ENCODE measurements at regions of chr1 and their contacts with region 1.

Region 1: GRCh38 chr1:203861379-203862184 is at the start of gene SNRPE:
- DNase-seq: peak; percentile 98
- ATAC-seq: peak; percentile 98
- H3K4me3 Mint-ChIP-seq: peak within 1 kb of the TSS; percentile 100
- H3K27ac Mint-ChIP-seq: peak within 1 kb of the TSS; percentile 99
- H3K4me1 Mint-ChIP-seq: peaks cover 8% of the 10 kb centered on the region
- H3K27me3 Mint-ChIP-seq: no peaks in the 10 kb centered on the region
- total RNA-seq, gene SNRPE: 211 to 416 TPM

Region 2: GRCh38 chr1:202888531-202889360 is 972.8 kb before region 1 on chr1 and contains the start of gene RABIF:
- CTCF ChIA-PET with region 1: no interaction called
- POLR2A ChIA-PET with region 1: no interaction called
- intact Hi-C with region 1: loop called in 1 of 2 experiments (anchors 2 kb)
- DNase-seq: peak; percentile 98
- ATAC-seq: peak; percentile 94
- H3K4me3 Mint-ChIP-seq: peak within 1 kb of the TSS; percentile 91
- H3K27ac Mint-ChIP-seq: peak within 1 kb of the TSS; percentile 96
- H3K4me1 Mint-ChIP-seq: peaks cover 15% of the 10 kb centered on the region
- H3K27me3 Mint-ChIP-seq: no peaks in the 10 kb centered on the region
- total RNA-seq, gene RABIF: 6.8 to 7.4 TPM

Region 3: DNA sequence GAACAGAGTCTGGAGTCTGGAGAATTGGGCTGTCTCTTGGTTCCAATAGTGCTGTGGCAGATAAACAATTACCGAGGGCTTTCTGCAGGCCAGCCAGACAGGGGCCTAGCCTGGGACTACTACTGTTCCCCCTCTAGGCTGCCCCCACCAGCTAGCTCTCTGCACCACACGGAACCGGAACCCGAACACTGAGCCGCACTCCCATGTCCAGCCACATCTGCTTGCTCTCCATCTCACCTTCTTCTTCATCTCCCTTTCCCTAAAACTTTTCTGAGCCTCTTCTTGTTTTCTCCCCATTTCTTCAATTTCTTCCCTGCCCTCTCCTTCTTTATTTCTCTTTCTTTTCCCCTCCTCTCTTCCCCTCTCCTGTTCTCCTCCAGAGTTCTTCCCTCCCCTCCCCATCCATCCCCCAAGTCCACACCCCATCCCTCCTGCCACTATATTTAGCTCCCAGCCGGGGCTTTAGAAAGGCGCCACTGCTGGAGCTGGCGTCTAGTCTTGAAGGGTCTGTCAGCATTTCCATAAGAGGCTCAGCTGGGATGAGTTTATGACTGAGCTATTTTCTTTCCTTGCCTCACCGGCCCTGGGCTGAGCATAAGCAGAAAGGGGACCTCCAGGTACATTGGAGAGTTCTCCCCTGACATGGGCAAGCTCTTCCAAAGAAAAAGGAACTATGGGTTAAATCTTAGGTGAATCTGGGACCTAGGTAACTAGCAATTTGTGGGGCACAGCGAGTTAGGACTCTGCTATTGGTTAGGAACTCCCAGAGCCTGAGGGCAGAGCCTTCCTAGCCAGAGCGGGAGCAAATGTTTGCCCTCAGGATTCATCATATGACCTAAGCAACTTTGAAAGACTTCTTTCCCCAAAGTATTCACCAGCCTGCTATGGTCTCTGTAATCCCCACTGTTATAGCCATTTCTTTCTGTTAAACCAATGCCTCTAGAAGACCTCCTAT is 260.5 kb before region 1 on chr1:
- CTCF ChIA-PET with region 1: no interaction called
- POLR2A ChIA-PET with region 1: no interaction called
- intact Hi-C with region 1: no loop called
- DNase-seq: no peak
- ATAC-seq: no peak
- H3K4me3 Mint-ChIP-seq: no peak overlapping the region
- H3K27ac Mint-ChIP-seq: peak overlapping the region; percentile 51
- H3K4me1 Mint-ChIP-seq: peaks cover 10% of the 10 kb centered on the region
- H3K27me3 Mint-ChIP-seq: no peaks in the 10 kb centered on the region

Region 4: DNA sequence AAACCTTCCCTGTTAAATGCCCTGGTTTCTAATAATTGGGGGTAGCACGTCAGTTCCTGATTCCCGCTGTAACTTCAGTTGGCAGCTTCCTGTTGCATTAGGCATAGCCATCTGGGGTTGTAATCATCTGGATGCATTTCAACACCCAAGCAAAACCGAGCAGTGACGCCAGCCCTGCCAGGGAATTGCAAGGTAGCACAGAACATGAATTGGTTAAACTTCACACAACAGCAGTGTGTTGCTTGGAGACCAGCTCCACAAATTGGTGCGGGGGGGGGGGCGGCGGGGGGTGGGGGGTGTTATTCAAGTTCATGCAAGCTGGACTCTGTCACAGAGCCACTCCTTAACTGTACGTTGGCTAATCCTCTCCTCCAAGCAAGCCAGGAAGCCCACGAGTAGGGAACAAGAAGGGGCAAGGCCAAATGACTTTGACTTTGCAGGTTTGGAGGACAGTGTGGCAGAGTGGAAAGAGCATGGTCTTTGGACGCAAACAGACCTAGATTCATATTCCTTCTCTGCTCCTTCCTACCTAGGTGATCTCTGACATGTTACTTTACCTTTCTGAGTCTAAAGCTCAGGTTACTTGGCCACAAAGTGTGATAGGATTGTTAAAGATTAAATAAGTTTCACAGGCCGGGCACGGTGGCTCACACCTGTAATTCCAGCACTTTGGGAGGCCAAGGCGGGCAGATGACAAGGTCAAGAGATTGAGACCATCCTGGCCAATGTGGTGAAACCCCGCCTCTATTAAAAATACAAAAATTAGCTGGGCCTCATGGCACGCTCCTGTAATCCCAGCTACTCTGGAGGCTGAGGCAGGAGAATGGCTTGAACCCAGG is 91.9 kb before region 1 on chr1:
- CTCF ChIA-PET with region 1: no interaction called
- POLR2A ChIA-PET with region 1: no interaction called
- intact Hi-C with region 1: loop called in 1 of 2 experiments (anchors 1 kb)
- DNase-seq: no peak
- ATAC-seq: no peak
- H3K4me3 Mint-ChIP-seq: no peak overlapping the region
- H3K27ac Mint-ChIP-seq: peak overlapping the region; percentile 59
- H3K4me1 Mint-ChIP-seq: peaks cover 25% of the 10 kb centered on the region
- H3K27me3 Mint-ChIP-seq: no peaks in the 10 kb centered on the region

Region 5: GRCh38 chr1:204128964-204129896 is 267.6 kb after region 1 on chr1:
- CTCF ChIA-PET with region 1: interaction called, 15 read pairs
- POLR2A ChIA-PET with region 1: no interaction called
- intact Hi-C with region 1: loop called (anchors 1 kb)
- DNase-seq: peak; percentile 82
- ATAC-seq: peak; percentile 88
- H3K4me3 Mint-ChIP-seq: no peak overlapping the region
- H3K27ac Mint-ChIP-seq: no peak overlapping the region
- H3K4me1 Mint-ChIP-seq: peaks cover 5% of the 10 kb centered on the region
- H3K27me3 Mint-ChIP-seq: no peaks in the 10 kb centered on the region

Region 6: GRCh38 chr1:204207136-204207616 is 345.6 kb after region 1 on chr1:
- CTCF ChIA-PET with region 1: no interaction called
- POLR2A ChIA-PET with region 1: no interaction called
- intact Hi-C with region 1: loop called (anchors 1 to 2 kb)
- DNase-seq: peak; percentile 89
- ATAC-seq: peak; percentile 98
- H3K4me3 Mint-ChIP-seq: no peak overlapping the region
- H3K27ac Mint-ChIP-seq: no peak overlapping the region
- H3K4me1 Mint-ChIP-seq: peaks cover 12% of the 10 kb centered on the region
- H3K27me3 Mint-ChIP-seq: peaks cover 26% of the 10 kb centered on the region

Region 7: DNA sequence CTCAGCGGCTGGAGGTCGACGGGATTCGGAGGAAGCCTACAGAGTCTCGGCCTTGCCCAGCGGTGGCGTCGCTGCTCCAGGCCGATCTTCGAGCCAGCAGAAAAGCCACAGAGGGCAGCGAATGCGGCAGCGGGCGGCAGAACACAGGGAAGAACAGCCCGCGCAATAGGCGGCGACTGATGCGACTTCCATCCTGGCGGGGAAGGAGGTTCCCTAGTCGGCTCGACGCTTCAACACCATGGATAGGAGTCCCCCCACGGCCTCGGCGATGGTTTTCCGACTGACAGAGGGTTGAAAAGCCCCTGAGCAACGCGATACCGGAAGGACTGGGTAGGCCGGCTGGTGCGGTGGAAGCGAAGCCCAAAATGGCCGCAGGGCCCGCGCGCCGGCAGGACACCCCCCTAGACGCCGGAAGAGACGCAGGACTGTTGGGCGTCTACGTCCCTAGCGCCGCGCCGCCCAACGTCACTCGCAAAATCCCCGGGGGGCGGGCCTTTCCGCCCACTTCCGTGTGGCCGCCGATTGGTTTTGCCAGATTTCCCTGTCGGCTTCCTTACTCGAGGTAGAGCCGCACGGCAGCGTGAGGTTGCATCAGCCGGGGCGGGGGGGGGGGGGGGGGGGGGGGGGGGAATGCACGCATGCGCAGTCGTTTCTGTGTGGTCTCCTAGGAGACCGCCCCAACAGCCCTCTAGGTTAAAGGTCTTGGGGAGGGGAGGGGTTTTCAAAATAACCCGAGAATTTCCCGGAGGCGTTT is 550.0 kb after region 1 on chr1 and contains the start of gene PPP1R15B:
- CTCF ChIA-PET with region 1: no interaction called
- POLR2A ChIA-PET with region 1: no interaction called
- intact Hi-C with region 1: loop called (anchors 1 to 10 kb)
- DNase-seq: peak; percentile 98
- ATAC-seq: peak; percentile 92
- H3K4me3 Mint-ChIP-seq: peak within 1 kb of the TSS; percentile 98
- H3K27ac Mint-ChIP-seq: peak within 1 kb of the TSS; percentile 100
- H3K4me1 Mint-ChIP-seq: peaks cover 10% of the 10 kb centered on the region
- H3K27me3 Mint-ChIP-seq: no peaks in the 10 kb centered on the region
- total RNA-seq, gene PPP1R15B: 55.9 to 57.6 TPM